ENCODE measurements at regions of chr2 and their contacts with region 1.

Region 1: GRCh38 chr2:224284134-224284946 is 117.6 kb downstream of the FAM124B start:
- DNase-seq: no peak
- H3K4me3 ChIP-seq: no peak overlapping the region
- H3K27ac ChIP-seq: no peak overlapping the region
- H3K4me1 ChIP-seq: no peaks in the 10 kb centered on the region
- H3K27me3 ChIP-seq: no peaks in the 10 kb centered on the region
- CTCF ChIP-seq: peak; percentile 27 to 92 (median 89)
- EP300 ChIP-seq: no peak
- POLR2A ChIP-seq: no peak

Region 2: DNA sequence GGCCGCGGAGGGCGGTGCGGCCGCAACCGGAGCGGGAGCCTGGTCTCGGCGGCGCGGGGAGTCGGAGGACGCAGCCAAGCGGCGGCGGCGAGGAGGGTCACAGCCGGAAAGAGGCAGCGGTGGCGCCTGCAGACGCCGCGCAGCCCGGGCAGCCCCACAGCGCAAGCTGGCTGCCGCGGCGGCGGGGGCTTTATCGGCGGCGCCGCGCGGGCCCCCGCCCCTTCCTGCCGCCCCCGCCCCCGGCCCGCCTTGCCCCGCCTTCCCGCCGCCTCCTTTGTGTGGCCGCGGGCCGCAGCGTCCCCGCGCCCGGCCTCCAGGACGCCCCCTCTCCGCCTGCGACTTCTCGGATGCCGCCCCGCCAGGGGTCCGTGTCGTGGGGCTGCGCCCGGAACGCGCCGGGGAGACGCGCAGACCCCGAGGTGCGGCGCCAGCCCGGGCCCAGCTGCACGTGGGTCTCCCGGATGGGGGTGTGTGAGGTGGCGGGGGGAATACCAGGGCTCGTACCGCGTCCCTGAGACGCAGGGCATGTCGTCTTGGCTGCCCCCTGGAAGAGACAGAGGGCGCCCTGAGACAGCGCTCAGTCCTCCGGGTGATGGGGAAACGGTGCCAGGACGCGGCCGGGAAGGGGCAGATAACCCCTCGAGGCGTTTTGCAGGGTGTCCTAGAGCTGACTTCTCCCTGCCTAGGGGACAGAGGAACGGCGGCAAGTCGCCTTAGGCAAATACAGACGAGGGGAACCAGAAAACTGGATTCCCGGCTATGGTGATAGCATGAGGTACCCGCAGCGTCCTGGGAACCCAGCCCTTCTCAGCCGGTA is 245.0 kb before region 1 on chr2 and contains the start of gene SERPINE2:
- intact Hi-C with region 1: loop called in 1 of 4 experiments (anchors 10 kb)
- DNase-seq: peak; percentile 69 to 82 (median 73)
- H3K4me3 ChIP-seq: peak within 1 kb of the TSS; percentile 46
- H3K27ac ChIP-seq: peak within 1 kb of the TSS; percentile 71 to 86
- H3K4me1 ChIP-seq: peaks cover 24% of the 10 kb centered on the region
- H3K27me3 ChIP-seq: no peaks in the 10 kb centered on the region
- CTCF ChIP-seq: peak in 2 of 3 donors; percentile 16 to 18
- EP300 ChIP-seq: no peak
- POLR2A ChIP-seq: no peak
- total RNA-seq, gene SERPINE2: 42.5 to 215 (median 75.9) TPM

Region 3: GRCh38 chr2:224072554-224073188 is 211.7 kb before region 1 on chr2:
- intact Hi-C with region 1: no loop called
- DNase-seq: peak in 2 of 5 donors; percentile 25 to 54
- H3K4me3 ChIP-seq: no peak overlapping the region
- H3K27ac ChIP-seq: peak overlapping the region in 1 of 2 donors; percentile 12
- H3K4me1 ChIP-seq: peaks cover 3% of the 10 kb centered on the region
- H3K27me3 ChIP-seq: no peaks in the 10 kb centered on the region
- CTCF ChIP-seq: no peak
- EP300 ChIP-seq: no peak
- POLR2A ChIP-seq: no peak

Region 4: DNA sequence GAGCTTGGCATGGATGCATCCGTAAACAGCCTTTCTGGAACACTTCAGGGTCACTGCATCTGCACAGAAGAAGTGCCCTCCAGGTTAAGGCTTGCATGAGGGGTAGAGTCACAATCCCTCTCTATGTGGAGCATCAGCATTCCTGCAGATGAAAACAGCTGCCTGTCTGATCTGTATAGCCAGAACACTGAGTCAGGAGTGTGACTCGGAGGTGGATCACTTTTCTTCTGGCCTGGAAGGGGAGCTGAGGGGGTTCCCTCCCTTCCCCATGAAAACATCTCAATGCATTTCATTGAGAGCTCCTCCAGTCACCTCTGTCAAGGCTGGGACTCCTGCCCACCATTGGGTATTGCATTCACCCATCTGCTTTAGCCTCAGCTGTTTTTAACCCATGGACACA is 172.8 kb before region 1 on chr2:
- intact Hi-C with region 1: no loop called
- DNase-seq: no peak
- H3K4me3 ChIP-seq: no peak overlapping the region
- H3K27ac ChIP-seq: no peak overlapping the region
- H3K4me1 ChIP-seq: peaks cover 3% of the 10 kb centered on the region
- H3K27me3 ChIP-seq: no peaks in the 10 kb centered on the region
- CTCF ChIP-seq: no peak
- EP300 ChIP-seq: no peak
- POLR2A ChIP-seq: no peak

Region 5: GRCh38 chr2:224211791-224212190 is 72.5 kb before region 1 on chr2:
- intact Hi-C with region 1: no loop called
- DNase-seq: peak in 1 of 5 donors; percentile 22
- H3K4me3 ChIP-seq: no peak overlapping the region
- H3K27ac ChIP-seq: no peak overlapping the region
- H3K4me1 ChIP-seq: no peaks in the 10 kb centered on the region
- H3K27me3 ChIP-seq: no peaks in the 10 kb centered on the region
- CTCF ChIP-seq: no peak
- EP300 ChIP-seq: no peak
- POLR2A ChIP-seq: no peak

Region 6: GRCh38 chr2:224377751-224378700 is 93.7 kb after region 1 on chr2:
- intact Hi-C with region 1: no loop called
- DNase-seq: no peak
- H3K4me3 ChIP-seq: no peak overlapping the region
- H3K27ac ChIP-seq: no peak overlapping the region
- H3K4me1 ChIP-seq: no peaks in the 10 kb centered on the region
- H3K27me3 ChIP-seq: no peaks in the 10 kb centered on the region
- CTCF ChIP-seq: no peak
- EP300 ChIP-seq: no peak
- POLR2A ChIP-seq: no peak

Measured in ovary (tissue), 10 donors.